AG04449 (cell line): ENCODE measurements at regions of chr1 and their contacts with region 1.

Region 1: GRCh38 chr1:32900371-32900950 is 728 bp downstream of the TMEM54 start:
- DNase-seq: no peak
- H3K4me3 ChIP-seq: peak overlapping the region; percentile 63
- CTCF ChIP-seq: no peak

Region 2: GRCh38 chr1:32886004-32886827 is 14.2 kb before region 1 on chr1 and contains the start of gene HPCA:
- CTCF ChIA-PET with region 1: interaction called, 29 read pairs
- POLR2A ChIA-PET with region 1: no interaction called
- DNase-seq: no peak
- H3K4me3 ChIP-seq: peak within 1 kb of the TSS; percentile 20
- CTCF ChIP-seq: peak; percentile 97